Ascending aorta (tissue), 2 donors: ENCODE measurements at regions of chr5 and their contacts with region 1.

Region 1: GRCh38 chr5:143573568-143574170 is 170.2 kb upstream of the NR3C1 start:
- DNase-seq: no peak
- H3K4me3 ChIP-seq: no peak overlapping the region
- H3K27ac ChIP-seq: no peak overlapping the region
- H3K4me1 ChIP-seq: peaks cover 0 to 6% of the 10 kb centered on the region in 2 donors
- H3K27me3 ChIP-seq: no peaks in the 10 kb centered on the region
- CTCF ChIP-seq: no peak

Region 2: GRCh38 chr5:143501304-143502044 is 72.2 kb before region 1 on chr5:
- intact Hi-C with region 1: loop called (anchors 5 kb)
- DNase-seq: no peak
- H3K4me3 ChIP-seq: no peak overlapping the region
- H3K27ac ChIP-seq: no peak overlapping the region
- H3K4me1 ChIP-seq: no peaks in the 10 kb centered on the region
- H3K27me3 ChIP-seq: no peaks in the 10 kb centered on the region
- CTCF ChIP-seq: no peak

Region 3: DNA sequence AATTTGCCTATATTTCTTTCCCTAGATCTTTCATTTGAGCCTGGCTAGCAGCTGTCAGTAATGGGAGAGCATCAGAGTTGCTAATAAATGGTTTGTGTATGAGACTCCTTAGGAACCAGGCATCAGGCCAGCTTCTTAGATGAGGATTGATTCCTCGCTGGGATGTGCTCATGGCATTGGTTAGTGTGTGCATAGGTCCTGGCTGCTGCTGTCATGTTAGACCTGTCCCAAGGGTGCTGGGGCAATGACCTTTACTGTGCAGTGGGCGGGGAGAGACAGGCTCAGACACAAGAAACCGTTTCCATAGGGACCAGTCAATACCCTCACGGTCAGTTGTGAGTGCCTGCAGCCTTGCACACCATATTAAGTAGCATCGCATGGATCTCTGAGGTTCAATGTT is 57.8 kb before region 1 on chr5:
- intact Hi-C with region 1: no loop called
- DNase-seq: no peak
- H3K4me3 ChIP-seq: no peak overlapping the region
- H3K27ac ChIP-seq: no peak overlapping the region
- H3K4me1 ChIP-seq: peaks cover 0 to 13% of the 10 kb centered on the region in 2 donors
- H3K27me3 ChIP-seq: no peaks in the 10 kb centered on the region
- CTCF ChIP-seq: no peak